Caco-2 (cell line): ENCODE measurements at regions of chr20 and their contacts with region 1.

Region 1: GRCh38 chr20:62136283-62137091 is 6.7 kb downstream of the PSMA7 start:
- DNase-seq: peak; percentile 80 to 86
- H3K4me3 ChIP-seq: no peak overlapping the region
- H3K4me3 Mint-ChIP-seq: no peak overlapping the region
- H3K27ac Mint-ChIP-seq: peak overlapping the region; percentile 0
- H3K4me1 ChIP-seq: peaks cover 10% of the 10 kb centered on the region
- H3K4me1 Mint-ChIP-seq: peaks cover 3% of the 10 kb centered on the region
- H3K27me3 ChIP-seq: no peaks in the 10 kb centered on the region
- H3K27me3 Mint-ChIP-seq: no peaks in the 10 kb centered on the region
- CTCF ChIP-seq: peak; percentile 95 to 98

Region 2: GRCh38 chr20:62010551-62011402 is 125.7 kb before region 1 on chr20:
- CTCF ChIA-PET with region 1: interaction called, 22 read pairs
- POLR2A ChIA-PET with region 1: no interaction called
- intact Hi-C with region 1: loop called (anchors 1 kb)
- DNase-seq: peak in 1 of 2 experiments; percentile 82
- H3K4me3 ChIP-seq: no peak overlapping the region
- H3K4me3 Mint-ChIP-seq: no peak overlapping the region
- H3K27ac Mint-ChIP-seq: peak overlapping the region; percentile 5
- H3K4me1 ChIP-seq: no peaks in the 10 kb centered on the region
- H3K4me1 Mint-ChIP-seq: no peaks in the 10 kb centered on the region
- H3K27me3 ChIP-seq: no peaks in the 10 kb centered on the region
- H3K27me3 Mint-ChIP-seq: no peaks in the 10 kb centered on the region
- CTCF ChIP-seq: peak; percentile 88 to 93

Region 3: DNA sequence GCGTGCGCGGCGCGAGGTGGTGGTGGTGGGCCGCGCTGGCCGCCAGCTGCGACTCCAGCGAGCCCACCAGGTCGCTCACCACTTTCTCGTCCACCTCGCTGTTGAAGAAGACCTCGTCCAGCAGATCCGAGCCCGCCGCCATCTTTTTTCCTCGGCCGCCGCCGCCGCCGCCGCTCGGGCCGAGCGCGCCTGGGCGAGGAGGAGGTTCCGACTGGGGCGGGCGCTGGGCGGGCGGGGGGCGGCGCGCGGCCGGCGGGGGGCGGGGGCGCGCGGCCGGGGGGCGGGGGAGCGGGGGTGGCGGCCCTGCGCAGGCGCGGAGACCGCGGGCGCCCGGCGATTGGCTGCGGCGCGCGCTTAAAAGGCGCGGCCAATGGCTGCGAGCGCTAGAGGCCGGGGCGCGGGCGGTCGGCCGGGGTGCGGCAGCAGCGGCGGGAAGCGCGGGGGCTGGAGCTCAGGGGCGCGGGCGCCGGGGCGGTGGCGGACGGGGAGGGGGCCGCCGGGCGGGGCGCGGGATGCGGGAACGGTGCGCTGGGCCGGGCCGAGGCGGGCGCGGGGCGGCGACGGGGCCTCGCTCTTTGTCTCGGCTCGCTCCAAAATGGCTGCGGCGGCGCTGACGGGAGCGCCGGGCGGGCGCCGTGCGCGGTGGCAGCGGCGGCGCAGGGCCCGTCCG is 70.7 kb before region 1 on chr20 and contains the start of gene TAF4:
- CTCF ChIA-PET with region 1: interaction called, 8 read pairs
- POLR2A ChIA-PET with region 1: interaction called, 13 read pairs
- intact Hi-C with region 1: loop called (anchors 2 kb)
- DNase-seq: peak; percentile 88 to 92
- H3K4me3 ChIP-seq: peak within 1 kb of the TSS; percentile 68
- H3K4me3 Mint-ChIP-seq: peak within 1 kb of the TSS; percentile 85
- H3K27ac Mint-ChIP-seq: peak within 1 kb of the TSS; percentile 91
- H3K4me1 ChIP-seq: peaks cover 28% of the 10 kb centered on the region
- H3K4me1 Mint-ChIP-seq: peaks cover 38% of the 10 kb centered on the region
- H3K27me3 ChIP-seq: no peaks in the 10 kb centered on the region
- H3K27me3 Mint-ChIP-seq: no peaks in the 10 kb centered on the region
- CTCF ChIP-seq: no peak
- total RNA-seq, gene TAF4: 94.9 and 98.2 TPM in 2 replicates

Region 4: DNA sequence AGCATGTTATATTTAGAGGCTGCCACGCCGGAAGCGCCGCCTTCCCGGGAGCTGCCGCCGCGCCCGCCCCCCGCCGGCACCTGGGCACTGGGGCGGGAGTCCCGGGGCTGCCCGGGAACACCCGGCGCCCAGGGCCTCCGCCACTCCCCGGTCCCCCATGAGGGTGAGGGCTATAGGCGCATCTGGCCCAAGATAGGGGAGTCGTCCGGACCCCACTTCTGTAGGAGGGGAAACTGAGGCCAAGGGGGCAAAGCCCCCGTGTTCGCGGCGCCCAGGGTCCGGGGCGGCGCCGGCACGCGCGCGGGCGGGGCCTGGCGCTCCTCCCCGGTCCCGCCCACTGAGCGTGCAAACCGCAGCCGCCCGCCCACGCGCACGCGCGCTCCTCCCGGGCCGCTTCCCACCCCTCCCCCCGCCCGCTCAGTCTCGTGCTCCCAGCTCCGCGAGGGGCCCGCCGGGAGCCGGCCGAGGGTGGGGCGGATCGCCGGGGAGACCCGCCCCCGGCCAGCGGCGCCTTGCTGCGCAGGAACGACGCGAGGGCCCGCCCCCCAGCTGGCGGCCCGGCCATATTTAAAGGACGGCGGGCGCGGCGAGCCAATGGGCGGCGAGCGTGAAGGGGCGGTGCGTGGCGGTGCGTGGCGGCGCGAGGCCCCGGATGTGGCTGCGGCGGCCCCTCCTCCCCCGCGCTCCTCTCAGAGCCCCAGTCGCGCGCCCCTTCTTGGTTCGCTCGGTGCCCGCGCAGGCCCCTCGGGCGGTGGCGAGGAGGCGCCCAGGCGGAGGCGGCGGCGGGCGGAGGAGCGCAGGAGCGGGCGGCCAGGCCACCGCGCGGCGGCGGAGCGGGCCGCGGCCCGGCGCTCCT is 14.5 kb before region 1 on chr20 and contains the start of gene LSM14B:
- CTCF ChIA-PET with region 1: interaction called, 3 read pairs
- POLR2A ChIA-PET with region 1: interaction called, 3 read pairs
- intact Hi-C with region 1: loop called (anchors 2 kb)
- DNase-seq: peak; percentile 99 to 100
- H3K4me3 ChIP-seq: peak within 1 kb of the TSS; percentile 96
- H3K4me3 Mint-ChIP-seq: peak within 1 kb of the TSS; percentile 76
- H3K27ac Mint-ChIP-seq: peak within 1 kb of the TSS; percentile 65
- H3K4me1 ChIP-seq: peaks cover 19% of the 10 kb centered on the region
- H3K4me1 Mint-ChIP-seq: peaks cover 28% of the 10 kb centered on the region
- H3K27me3 ChIP-seq: no peaks in the 10 kb centered on the region
- H3K27me3 Mint-ChIP-seq: peaks cover 10% of the 10 kb centered on the region
- CTCF ChIP-seq: no peak
- total RNA-seq, gene LSM14B: 143 and 154 TPM in 2 replicates